Cardiac septum (tissue), 1 donor: ENCODE measurements at regions of chr9 and their contacts with region 1.

Region 1: DNA sequence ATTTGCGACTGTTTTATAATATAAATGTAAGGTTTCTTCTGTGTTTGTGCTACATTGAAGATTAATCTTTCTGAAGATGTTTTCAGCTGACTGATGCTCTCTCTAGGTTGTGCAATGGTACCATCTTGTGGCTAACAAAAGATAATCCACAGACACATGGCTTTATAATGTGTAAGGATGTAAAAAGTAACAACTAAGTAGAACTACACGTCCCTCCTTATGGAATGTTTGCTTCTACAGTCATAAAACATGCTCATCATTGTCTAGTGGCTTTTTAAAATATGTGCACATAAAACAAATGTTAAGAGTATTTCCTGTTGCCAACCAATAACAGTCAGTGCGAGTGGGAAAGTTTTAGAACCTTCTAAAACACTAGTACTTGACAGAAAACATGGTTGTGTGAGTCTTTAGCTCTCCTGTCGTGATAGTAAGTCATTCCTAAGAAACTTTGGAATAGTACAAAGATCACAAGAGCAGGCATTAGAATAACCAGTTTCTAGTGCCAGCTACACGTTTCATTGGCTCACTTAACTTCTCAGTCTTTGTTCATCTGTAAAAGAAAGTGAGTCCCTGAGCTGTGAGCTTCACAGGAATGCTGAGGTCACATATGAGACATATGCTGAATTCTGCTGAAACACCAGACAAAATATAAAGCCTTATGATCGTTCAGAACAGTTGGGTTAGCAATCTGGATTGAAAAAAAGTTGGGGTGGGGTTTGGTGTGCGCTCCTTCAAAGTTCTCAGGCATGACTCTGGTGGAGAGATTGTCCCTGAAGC is 75.7 kb upstream of the GLIS3 start:
- DNase-seq: no peak

Region 2: DNA sequence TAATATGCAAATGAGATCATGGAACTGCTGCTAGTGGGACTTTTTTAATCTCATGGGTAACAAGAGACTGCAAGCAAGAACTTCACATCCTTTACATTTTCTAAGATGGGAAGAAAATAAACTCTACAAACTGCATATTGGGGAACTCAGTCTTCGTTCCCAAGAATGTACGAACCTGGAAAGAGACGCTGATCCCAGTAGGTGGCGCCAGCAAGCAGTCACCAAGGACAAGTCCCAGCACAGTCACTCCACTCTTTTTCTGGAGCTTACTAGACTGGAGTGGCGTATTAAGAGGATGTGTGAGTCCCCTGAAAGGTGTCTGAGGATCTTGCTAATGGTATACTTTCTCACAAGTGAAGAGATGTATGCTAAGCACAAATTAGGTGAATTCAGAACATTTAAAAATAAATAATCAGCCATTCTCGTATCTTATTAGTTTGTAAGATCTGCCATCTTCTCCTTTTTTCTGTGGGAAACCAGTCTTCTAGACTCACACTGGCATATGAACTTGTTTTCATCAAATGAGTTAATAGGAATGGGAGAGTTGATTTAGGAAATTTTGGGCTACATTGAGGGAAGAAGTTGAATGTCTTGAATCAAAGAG is 1515.7 kb before region 1 on chr9:
- intact Hi-C with region 1: loop called (anchors 10 kb)
- DNase-seq: no peak

Region 3: DNA sequence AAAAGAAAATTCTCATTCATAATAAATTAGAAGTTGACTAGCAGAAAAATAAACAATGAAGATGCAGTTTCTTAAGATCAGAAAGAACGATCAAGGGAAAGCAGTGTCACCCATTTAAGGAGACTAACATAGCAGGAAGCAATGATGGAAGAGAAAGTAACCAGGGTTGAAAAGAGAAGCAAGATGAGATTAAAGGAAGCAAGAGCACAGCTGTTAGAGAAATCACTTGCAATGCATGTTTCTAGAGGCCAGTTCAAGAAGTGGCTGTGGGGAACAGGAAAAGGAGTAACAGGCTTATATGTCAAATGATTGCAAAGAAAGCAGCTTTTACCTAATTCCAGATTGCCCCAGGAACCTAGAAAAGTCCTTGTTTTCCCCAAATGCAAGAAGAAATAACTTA is 67.8 kb after region 1 on chr9:
- intact Hi-C with region 1: no loop called
- DNase-seq: no peak